Dorsolateral prefrontal cortex (tissue), 120 donors: ENCODE measurements at regions of chr7 and their contacts with region 1.

Region 1: GRCh38 chr7:90178679-90179278 is 24.5 kb downstream of the STEAP1 start:
- DNase-seq: no peak
- H3K4me3 ChIP-seq: no peak overlapping the region
- H3K27ac ChIP-seq: peak overlapping the region in 51 of 59 donors; percentile 15 to 86 (median 66)
- H3K27me3 ChIP-seq: no peaks in the 10 kb centered on the region
- CTCF ChIP-seq: no peak

Region 2: DNA sequence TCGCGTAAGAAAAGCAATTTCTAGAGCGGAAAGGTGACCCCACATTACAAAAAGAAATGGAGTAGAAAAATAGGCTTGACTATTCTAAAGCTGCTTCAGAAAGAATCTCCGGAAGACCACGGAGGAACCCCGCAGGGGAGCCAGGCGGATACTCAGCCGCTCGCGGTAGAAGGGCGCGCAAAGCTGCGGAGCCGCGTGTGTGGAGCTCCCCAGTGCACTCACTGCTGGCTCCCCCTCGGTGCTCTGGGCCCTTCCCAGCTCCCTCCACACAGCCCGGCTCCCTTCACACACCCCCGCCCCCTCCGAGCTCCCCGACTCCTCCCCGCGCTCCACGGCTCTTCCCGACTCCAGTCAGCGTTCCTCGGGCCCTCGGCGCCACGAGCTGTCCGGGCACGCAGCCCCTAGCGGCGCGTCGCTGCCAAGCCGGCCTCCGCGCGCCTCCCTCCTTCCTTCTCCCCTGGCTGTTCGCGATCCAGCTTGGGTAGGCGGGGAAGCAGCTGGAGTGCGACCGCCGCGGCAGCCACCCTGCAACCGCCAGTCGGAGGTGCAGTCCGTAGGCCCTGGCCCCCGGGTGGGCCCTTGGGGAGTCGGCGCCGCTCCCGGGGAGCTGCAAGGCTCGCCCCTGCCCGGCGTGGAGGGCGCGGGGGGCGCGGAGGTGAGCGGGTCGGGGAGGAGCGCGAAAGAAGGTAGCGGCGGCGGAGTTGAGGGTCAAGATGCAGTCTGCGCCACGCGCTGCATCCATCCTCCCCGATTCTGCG is 32.8 kb after region 1 on chr7 and contains the start of gene STEAP2:
- intact Hi-C with region 1: loop called in 1 of 2 experiments (anchors 5 kb)
- DNase-seq: peak; percentile 38 to 91 (median 82)
- H3K4me3 ChIP-seq: peak within 1 kb of the TSS; percentile 36 to 84 (median 68)
- H3K27ac ChIP-seq: peak within 1 kb of the TSS in 58 of 59 donors; percentile 19 to 95 (median 87)
- H3K27me3 ChIP-seq: peaks cover 0 to 15% (median 0%) of the 10 kb centered on the region in 45 donors
- CTCF ChIP-seq: peak in 44 of 56 donors; percentile 7 to 57 (median 34)
- total RNA-seq, gene STEAP2: 15.5 to 92.8 (median 53.9) TPM